ENCODE measurements at regions of chr9 and their contacts with region 1.

Region 1: GRCh38 chr9:117853442-117853841 is 149.2 kb downstream of the TLR4 start:
- DNase-seq: no peak
- H3K4me3 ChIP-seq: no peak overlapping the region
- H3K27ac ChIP-seq: no peak overlapping the region
- H3K4me1 ChIP-seq: no peaks in the 10 kb centered on the region
- H3K27me3 ChIP-seq: no peaks in the 10 kb centered on the region
- CTCF ChIP-seq: no peak

Region 2: DNA sequence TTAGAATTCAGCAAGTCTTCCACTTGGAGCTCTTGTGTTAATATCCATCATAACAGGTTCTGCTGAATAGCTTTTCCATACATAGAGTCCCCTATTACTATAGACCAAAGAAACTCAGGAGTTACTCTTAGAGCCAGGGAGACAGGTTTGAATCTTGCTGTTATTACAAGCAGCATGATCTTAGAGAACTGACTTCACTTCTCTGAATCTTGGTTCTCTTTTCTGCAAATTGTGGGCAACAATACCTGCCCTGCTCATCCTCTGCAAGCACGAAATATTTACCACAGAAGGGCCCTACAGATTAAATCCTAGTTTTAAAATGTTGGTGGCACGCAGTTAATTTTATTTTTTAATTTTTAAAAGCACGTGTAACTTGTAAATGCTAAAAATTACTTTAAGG is 37.5 kb before region 1 on chr9:
- CTCF ChIA-PET with region 1: no interaction called
- POLR2A ChIA-PET with region 1: no interaction called
- intact Hi-C with region 1: loop called (anchors 2 kb)
- DNase-seq: no peak
- H3K4me3 ChIP-seq: no peak overlapping the region
- H3K27ac ChIP-seq: no peak overlapping the region
- H3K4me1 ChIP-seq: no peaks in the 10 kb centered on the region
- H3K27me3 ChIP-seq: peaks cover 9% of the 10 kb centered on the region
- CTCF ChIP-seq: no peak

Region 3: GRCh38 chr9:117835798-117836197 is 17.6 kb before region 1 on chr9:
- CTCF ChIA-PET with region 1: no interaction called
- POLR2A ChIA-PET with region 1: no interaction called
- intact Hi-C with region 1: no loop called
- DNase-seq: no peak
- H3K4me3 ChIP-seq: no peak overlapping the region
- H3K27ac ChIP-seq: no peak overlapping the region
- H3K4me1 ChIP-seq: no peaks in the 10 kb centered on the region
- H3K27me3 ChIP-seq: peaks cover 27% of the 10 kb centered on the region
- CTCF ChIP-seq: no peak

Region 4: DNA sequence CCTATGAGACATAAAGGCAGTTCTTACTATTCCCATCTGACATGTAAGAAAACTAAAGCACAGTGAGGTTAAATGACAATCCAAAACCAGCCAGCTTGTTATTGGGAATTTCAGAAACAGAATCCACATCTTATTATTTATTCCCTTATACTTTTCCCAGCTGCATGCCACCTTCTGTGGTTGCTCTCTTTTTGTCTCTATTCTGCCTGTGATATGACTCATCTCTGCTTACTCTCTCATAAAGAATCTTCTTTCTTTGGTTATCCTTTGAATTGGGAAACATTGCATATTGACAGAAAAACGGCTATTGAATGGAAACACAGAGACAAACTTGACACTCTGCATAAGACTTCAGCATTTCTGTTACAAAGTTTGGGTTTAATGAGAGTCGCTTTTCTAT is 33.9 kb after region 1 on chr9:
- CTCF ChIA-PET with region 1: no interaction called
- POLR2A ChIA-PET with region 1: no interaction called
- intact Hi-C with region 1: no loop called
- DNase-seq: no peak
- H3K4me3 ChIP-seq: no peak overlapping the region
- H3K27ac ChIP-seq: no peak overlapping the region
- H3K4me1 ChIP-seq: no peaks in the 10 kb centered on the region
- H3K27me3 ChIP-seq: no peaks in the 10 kb centered on the region
- CTCF ChIP-seq: no peak

Region 5: DNA sequence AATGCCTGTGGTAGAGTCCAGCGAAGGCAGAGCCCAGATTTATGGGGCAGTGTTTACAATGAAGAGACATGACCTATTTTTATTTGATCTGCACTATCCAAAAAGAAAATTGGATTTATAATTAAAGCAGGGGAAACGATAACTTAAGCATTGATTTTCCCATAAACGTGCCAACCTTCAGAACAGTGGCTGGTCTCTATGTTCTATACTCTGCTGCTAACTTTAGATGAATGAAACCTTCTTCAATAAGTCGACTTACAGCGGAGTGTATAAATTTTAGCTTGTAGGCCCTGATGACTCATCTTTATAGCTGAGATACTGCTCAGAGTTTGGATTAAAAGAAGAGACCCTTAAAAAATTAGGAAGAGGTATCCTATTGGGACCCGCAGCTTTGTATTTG is 303.4 kb after region 1 on chr9:
- CTCF ChIA-PET with region 1: no interaction called
- POLR2A ChIA-PET with region 1: no interaction called
- intact Hi-C with region 1: no loop called
- DNase-seq: no peak
- H3K4me3 ChIP-seq: no peak overlapping the region
- H3K27ac ChIP-seq: no peak overlapping the region
- H3K4me1 ChIP-seq: no peaks in the 10 kb centered on the region
- H3K27me3 ChIP-seq: no peaks in the 10 kb centered on the region
- CTCF ChIP-seq: no peak